GM12878 (cell line): ENCODE measurements at regions of chr1 and their contacts with region 1.

Region 1: GRCh38 chr1:153990468-153991150 is at the start of gene RPS27:
- DNase-seq: peak; percentile 97
- ATAC-seq: peak; percentile 82
- H3K4me3 ChIP-seq: peak within 1 kb of the TSS; percentile 86
- H3K27ac ChIP-seq: peak within 1 kb of the TSS; percentile 96
- H3K4me1 ChIP-seq: peaks cover 9% of the 10 kb centered on the region
- H3K27me3 ChIP-seq: no peaks in the 10 kb centered on the region
- CTCF ChIP-seq: no peak
- EP300 ChIP-seq: no peak
- POLR2A ChIP-seq: peak; percentile 100
- RAD21 ChIP-seq: no peak
- polyA plus RNA-seq, gene RPS27: 9,903 to 14,234 TPM

Region 2: GRCh38 chr1:153670859-153671627 is 319.6 kb before region 1 on chr1 and contains the start of gene ILF2:
- CTCF ChIA-PET with region 1: interaction called, 32 read pairs
- POLR2A ChIA-PET with region 1: no interaction called
- RAD21 ChIA-PET with region 1: interaction called, 14 read pairs
- SMC1A ChIA-PET with region 1: interaction called, 12 read pairs
- in situ Hi-C with region 1: loop called (anchors 5 kb)
- intact Hi-C with region 1: loop called (anchors 2 kb)
- DNase-seq: peak; percentile 100
- ATAC-seq: peak; percentile 95
- H3K4me3 ChIP-seq: peak within 1 kb of the TSS; percentile 99
- H3K27ac ChIP-seq: peak within 1 kb of the TSS; percentile 85
- H3K4me1 ChIP-seq: peaks cover 4% of the 10 kb centered on the region; the same call in 1 of the 2 replicates
- H3K27me3 ChIP-seq: no peaks in the 10 kb centered on the region
- CTCF ChIP-seq: peak; percentile 13 to 47 (median 32); a peak in 4 of 6 replicates
- EP300 ChIP-seq: peak in 1 of 2 experiments; percentile 83; a peak in 1 of 4 replicates
- POLR2A ChIP-seq: peak; percentile 94
- RAD21 ChIP-seq: no peak
- polyA plus RNA-seq, gene ILF2: 444 to 455 TPM

Region 3: DNA sequence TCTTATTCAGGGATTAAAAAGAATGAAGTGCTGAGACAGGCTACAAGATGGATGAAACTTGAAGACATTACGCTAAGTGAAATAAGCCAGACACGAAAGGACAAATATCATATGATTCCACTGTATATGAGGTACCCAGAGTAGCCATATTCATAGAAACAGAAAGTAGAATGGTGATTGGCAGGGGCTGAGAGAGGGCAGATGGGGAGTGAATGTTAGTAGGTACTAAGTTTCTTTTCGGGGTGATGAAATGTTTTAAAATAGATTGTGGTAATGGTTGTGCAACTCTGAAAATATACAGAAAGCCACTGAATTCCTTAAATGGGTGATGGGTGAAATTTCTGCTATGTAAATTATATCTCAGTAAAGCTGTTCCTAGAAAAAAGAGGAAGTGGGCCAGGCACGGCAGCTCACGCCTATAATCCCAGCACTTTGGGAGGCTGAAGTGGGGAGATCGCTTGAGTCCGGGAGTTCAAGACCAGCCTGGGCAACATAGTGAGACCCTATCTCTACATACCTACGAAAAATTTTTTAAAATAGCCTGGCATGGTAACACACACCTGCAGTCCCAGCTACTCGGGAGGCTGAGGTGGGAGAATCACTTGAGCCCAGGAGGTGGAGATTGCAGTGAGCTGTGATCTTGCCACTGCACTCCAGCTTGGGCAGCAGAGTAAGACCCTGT is 199.5 kb before region 1 on chr1:
- CTCF ChIA-PET with region 1: interaction called, 85 read pairs
- POLR2A ChIA-PET with region 1: interaction called, 5 read pairs
- RAD21 ChIA-PET with region 1: interaction called, 9 read pairs
- SMC1A ChIA-PET with region 1: interaction called, 46 read pairs
- in situ Hi-C with region 1: loop called (anchors 10 kb)
- intact Hi-C with region 1: no loop called
- DNase-seq: peak; percentile 95
- ATAC-seq: peak; percentile 97
- H3K4me3 ChIP-seq: 0 out of 2 replicates have a peak overlapping the region, but pooled peaks have one; percentile 28
- H3K27ac ChIP-seq: peak overlapping the region; percentile 91
- H3K4me1 ChIP-seq: peaks cover 29% of the 10 kb centered on the region
- H3K27me3 ChIP-seq: no peaks in the 10 kb centered on the region
- CTCF ChIP-seq: no peak
- EP300 ChIP-seq: peak; percentile 54 to 63; a peak in 3 of 4 replicates
- POLR2A ChIP-seq: no peak
- RAD21 ChIP-seq: no peak

Region 4: GRCh38 chr1:153816283-153816889 is 174.2 kb before region 1 on chr1:
- CTCF ChIA-PET with region 1: interaction called, 16 read pairs
- POLR2A ChIA-PET with region 1: no interaction called
- RAD21 ChIA-PET with region 1: interaction called, 12 read pairs
- SMC1A ChIA-PET with region 1: interaction called, 8 read pairs
- in situ Hi-C with region 1: no loop called
- intact Hi-C with region 1: loop called (anchors 1 kb)
- DNase-seq: no peak
- ATAC-seq: no peak
- H3K4me3 ChIP-seq: no peak overlapping the region
- H3K27ac ChIP-seq: no peak overlapping the region
- H3K4me1 ChIP-seq: no peaks in the 10 kb centered on the region; the same call in 1 of the 2 replicates
- H3K27me3 ChIP-seq: no peaks in the 10 kb centered on the region
- CTCF ChIP-seq: no peak
- EP300 ChIP-seq: no peak
- POLR2A ChIP-seq: no peak
- RAD21 ChIP-seq: no peak

Region 5: DNA sequence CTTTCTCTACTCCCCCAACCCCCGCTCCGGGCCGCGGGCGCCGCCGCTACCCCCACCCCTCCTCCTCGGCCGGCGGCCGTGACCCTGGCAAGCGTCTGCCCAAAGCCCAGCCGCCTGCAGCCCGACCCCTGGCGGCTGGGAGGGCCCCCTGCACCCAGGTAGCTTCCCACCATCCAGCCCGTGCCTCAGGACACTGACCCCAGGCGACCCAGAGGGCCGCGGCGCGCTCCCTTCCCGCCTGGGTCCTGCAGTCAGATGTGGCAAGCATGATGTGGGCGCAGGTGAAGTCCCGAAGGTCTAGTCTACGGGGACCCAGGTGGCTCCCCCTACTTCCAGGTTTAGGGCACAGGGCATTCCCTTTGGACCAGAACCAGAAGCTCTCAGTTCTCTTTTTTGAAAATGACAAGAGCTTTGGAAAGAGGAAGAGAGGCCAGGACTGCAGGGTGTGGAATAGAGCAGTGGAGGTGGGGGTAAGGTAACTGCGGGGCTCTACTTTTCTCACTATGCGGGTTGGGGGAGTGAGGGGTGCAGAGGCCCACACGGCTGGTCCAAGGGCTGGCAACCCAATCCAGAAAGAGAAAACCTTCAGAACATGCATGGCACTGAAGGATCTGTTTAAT is 43.9 kb before region 1 on chr1 and contains the start of gene DENND4B:
- CTCF ChIA-PET with region 1: interaction called, 20 read pairs
- POLR2A ChIA-PET with region 1: interaction called, 9 read pairs
- RAD21 ChIA-PET with region 1: interaction called, 19 read pairs
- SMC1A ChIA-PET with region 1: interaction called, 10 read pairs
- in situ Hi-C with region 1: no loop called
- intact Hi-C with region 1: no loop called
- DNase-seq: no peak
- ATAC-seq: peak; percentile 80
- H3K4me3 ChIP-seq: peak within 1 kb of the TSS; percentile 100
- H3K27ac ChIP-seq: peak within 1 kb of the TSS; percentile 95
- H3K4me1 ChIP-seq: peaks cover 21% of the 10 kb centered on the region
- H3K27me3 ChIP-seq: no peaks in the 10 kb centered on the region
- CTCF ChIP-seq: peak; percentile 78 to 95 (median 90)
- EP300 ChIP-seq: no peak
- POLR2A ChIP-seq: peak; percentile 41
- RAD21 ChIP-seq: peak; percentile 65
- polyA plus RNA-seq, gene DENND4B: 12.0 to 13.4 TPM

Region 6: DNA sequence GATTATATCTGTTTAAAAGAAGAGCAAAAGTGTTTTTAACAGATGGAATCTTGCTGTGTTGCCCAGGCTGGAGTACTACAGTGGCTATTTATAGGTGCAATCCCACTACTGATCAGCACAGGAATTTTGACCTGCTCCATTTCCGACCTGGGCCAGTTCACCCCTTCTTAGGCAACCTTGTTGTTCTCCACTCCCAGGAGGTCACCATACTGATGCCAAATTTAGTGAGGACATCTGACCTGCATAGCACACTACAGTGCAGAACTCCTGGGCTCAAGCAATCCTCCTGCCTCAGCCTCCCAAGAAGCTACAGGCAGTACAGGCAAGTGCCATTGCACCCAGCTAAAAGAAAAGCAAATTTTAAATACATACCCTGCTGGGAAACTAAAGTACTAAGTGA is 175.6 kb after region 1 on chr1:
- CTCF ChIA-PET with region 1: no interaction called
- POLR2A ChIA-PET with region 1: no interaction called
- RAD21 ChIA-PET with region 1: no interaction called
- SMC1A ChIA-PET with region 1: no interaction called
- in situ Hi-C with region 1: no loop called
- intact Hi-C with region 1: no loop called
- DNase-seq: no peak
- ATAC-seq: no peak
- H3K4me3 ChIP-seq: no peak overlapping the region
- H3K27ac ChIP-seq: no peak overlapping the region
- H3K4me1 ChIP-seq: no peaks in the 10 kb centered on the region
- H3K27me3 ChIP-seq: no peaks in the 10 kb centered on the region
- CTCF ChIP-seq: no peak
- EP300 ChIP-seq: no peak
- POLR2A ChIP-seq: no peak
- RAD21 ChIP-seq: no peak

Region 7: GRCh38 chr1:154183045-154183915 is 192.7 kb after region 1 on chr1:
- CTCF ChIA-PET with region 1: no interaction called
- POLR2A ChIA-PET with region 1: interaction called, 6 read pairs
- RAD21 ChIA-PET with region 1: no interaction called
- SMC1A ChIA-PET with region 1: interaction called, 4 read pairs
- in situ Hi-C with region 1: no loop called
- intact Hi-C with region 1: loop called (anchors 5 kb)
- DNase-seq: peak; percentile 73
- ATAC-seq: peak; percentile 81
- H3K4me3 ChIP-seq: peak overlapping the region; percentile 99
- H3K27ac ChIP-seq: peak overlapping the region; percentile 94
- H3K4me1 ChIP-seq: peaks cover 14% of the 10 kb centered on the region
- H3K27me3 ChIP-seq: no peaks in the 10 kb centered on the region
- CTCF ChIP-seq: no peak
- EP300 ChIP-seq: no peak
- POLR2A ChIP-seq: peak; percentile 98
- RAD21 ChIP-seq: no peak